Kidney (tissue), 22 donors: ENCODE measurements at regions of chr1 and their contacts with region 1.

Region 1: GRCh38 chr1:100622037-100622436 is 84.1 kb downstream of the GPR88 start:
- DNase-seq: peak in 3 of 5 donors; percentile 56 to 85 (median 83)
- H3K4me3 ChIP-seq: no peak overlapping the region
- H3K27ac ChIP-seq: peak overlapping the region; percentile 12 to 84
- H3K4me1 ChIP-seq: peaks cover 3 to 36% (median 17%) of the 10 kb centered on the region in 3 donors
- H3K27me3 ChIP-seq: no peaks in the 10 kb centered on the region
- CTCF ChIP-seq: no peak

Region 2: GRCh38 chr1:100377590-100378361 is 244.3 kb before region 1 on chr1:
- intact Hi-C with region 1: no loop called
- DNase-seq: peak in 1 of 5 donors; percentile 26
- H3K4me3 ChIP-seq: no peak overlapping the region
- H3K27ac ChIP-seq: no peak overlapping the region
- H3K4me1 ChIP-seq: no peaks in the 10 kb centered on the region
- H3K27me3 ChIP-seq: no peaks in the 10 kb centered on the region
- CTCF ChIP-seq: no peak

Region 3: DNA sequence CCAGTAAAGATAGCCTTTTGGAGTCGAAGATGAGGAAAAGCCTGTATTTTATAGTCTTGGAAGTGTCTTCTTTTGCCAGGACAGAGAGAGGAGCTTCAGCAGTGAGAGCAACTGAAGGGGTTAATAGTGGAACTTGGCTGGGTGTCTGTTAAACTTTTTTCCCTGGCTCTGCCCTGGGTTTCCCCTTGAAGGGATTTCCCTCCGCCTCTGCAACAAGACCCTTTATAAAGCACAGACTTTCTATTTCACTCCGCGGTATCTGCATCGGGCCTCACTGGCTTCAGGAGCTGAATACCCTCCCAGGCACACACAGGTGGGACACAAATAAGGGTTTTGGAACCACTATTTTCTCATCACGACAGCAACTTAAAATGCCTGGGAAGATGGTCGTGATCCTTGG is 97.5 kb after region 1 on chr1 and contains the start of gene VCAM1:
- intact Hi-C with region 1: loop called (anchors 10 kb)
- DNase-seq: peak; percentile 35 to 79 (median 49)
- H3K4me3 ChIP-seq: peak within 1 kb of the TSS; percentile 66 to 79 (median 69)
- H3K27ac ChIP-seq: peak within 1 kb of the TSS; percentile 57 to 61
- H3K4me1 ChIP-seq: peaks cover 0 to 2% (median 0%) of the 10 kb centered on the region in 3 donors
- H3K27me3 ChIP-seq: no peaks in the 10 kb centered on the region
- CTCF ChIP-seq: no peak
- total RNA-seq, gene VCAM1: 539 TPM

Region 4: GRCh38 chr1:100799954-100800612 is 178.0 kb after region 1 on chr1:
- intact Hi-C with region 1: no loop called
- DNase-seq: no peak
- H3K4me3 ChIP-seq: no peak overlapping the region
- H3K27ac ChIP-seq: no peak overlapping the region
- H3K4me1 ChIP-seq: no peaks in the 10 kb centered on the region
- H3K27me3 ChIP-seq: no peaks in the 10 kb centered on the region
- CTCF ChIP-seq: no peak